Activated B cell treated with CpG ODN at 0.5 μM for 24 hours (primary cell): ENCODE measurements at regions of chr9 and their contacts with region 1.

Region 1: GRCh38 chr9:7935681-7936080 is 136.1 kb upstream of the DMAC1 start:
- DNase-seq: no peak
- ATAC-seq: peak; percentile 90
- H3K4me3 Mint-ChIP-seq: peak overlapping the region; percentile 62
- H3K27ac Mint-ChIP-seq: peak overlapping the region; percentile 90
- H3K4me1 Mint-ChIP-seq: peaks cover 20% of the 10 kb centered on the region
- H3K27me3 Mint-ChIP-seq: no peaks in the 10 kb centered on the region
- CTCF ChIP-seq: no peak

Region 2: GRCh38 chr9:7607421-7607820 is 328.3 kb before region 1 on chr9:
- CTCF ChIA-PET with region 1: no interaction called
- POLR2A ChIA-PET with region 1: no interaction called
- intact Hi-C with region 1: no loop called
- DNase-seq: no peak
- ATAC-seq: no peak
- H3K4me3 Mint-ChIP-seq: no peak overlapping the region
- H3K27ac Mint-ChIP-seq: no peak overlapping the region
- H3K4me1 Mint-ChIP-seq: peaks cover 5% of the 10 kb centered on the region
- H3K27me3 Mint-ChIP-seq: no peaks in the 10 kb centered on the region
- CTCF ChIP-seq: no peak

Region 3: DNA sequence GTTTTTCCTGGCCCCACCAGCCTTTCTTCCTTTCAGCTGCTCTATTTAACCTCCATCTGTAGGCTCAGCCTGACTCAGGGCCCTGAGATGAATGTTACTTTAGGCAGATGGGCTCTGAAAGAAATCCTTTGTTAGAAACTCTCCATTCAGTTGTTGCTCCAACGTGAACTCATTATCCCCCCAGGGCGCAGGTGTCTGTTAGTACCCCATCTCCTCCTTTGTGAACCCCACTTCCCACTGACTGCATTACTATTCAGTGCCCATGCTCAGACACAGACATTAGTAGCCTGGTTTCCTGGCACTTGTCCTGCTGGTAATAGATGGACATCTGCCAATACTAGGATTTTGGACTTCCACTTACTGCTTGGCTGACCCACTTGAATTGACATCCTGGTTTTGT is 1405.5 kb after region 1 on chr9:
- CTCF ChIA-PET with region 1: no interaction called
- POLR2A ChIA-PET with region 1: no interaction called
- intact Hi-C with region 1: loop called (anchors 5 kb)
- DNase-seq: no peak
- ATAC-seq: no peak
- H3K4me3 Mint-ChIP-seq: no peak overlapping the region
- H3K27ac Mint-ChIP-seq: no peak overlapping the region
- H3K4me1 Mint-ChIP-seq: no peaks in the 10 kb centered on the region
- H3K27me3 Mint-ChIP-seq: no peaks in the 10 kb centered on the region
- CTCF ChIP-seq: no peak